Panc1 (cell line): ENCODE measurements at regions of chr10 and their contacts with region 1.

Region 1: DNA sequence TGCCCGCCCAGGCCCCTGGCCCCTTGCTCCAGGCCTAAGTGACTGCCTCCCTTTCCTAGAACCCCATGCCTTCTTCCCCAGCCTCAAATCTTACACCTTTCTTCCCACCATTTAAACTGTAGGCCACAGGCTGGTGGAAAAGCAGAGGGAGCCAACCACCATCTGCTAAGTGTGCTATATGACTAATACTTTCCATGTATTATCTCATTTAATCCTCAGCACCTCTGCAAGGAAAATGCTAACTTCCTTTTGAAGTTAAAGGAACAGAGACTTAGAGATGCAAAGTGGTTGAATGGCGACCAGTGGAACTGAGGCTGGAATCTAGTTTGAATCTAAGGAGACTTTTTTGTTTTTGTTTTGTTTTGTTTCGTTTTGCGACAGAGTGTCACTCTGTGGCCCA is 17.8 kb upstream of the MTPAP start:
- DNase-seq: no peak
- ATAC-seq: no peak
- H3K4me3 ChIP-seq: no peak overlapping the region
- H3K27ac ChIP-seq: no peak overlapping the region
- H3K4me1 ChIP-seq: no peaks in the 10 kb centered on the region
- H3K27me3 ChIP-seq: no peaks in the 10 kb centered on the region
- CTCF ChIP-seq: no peak

Region 2: DNA sequence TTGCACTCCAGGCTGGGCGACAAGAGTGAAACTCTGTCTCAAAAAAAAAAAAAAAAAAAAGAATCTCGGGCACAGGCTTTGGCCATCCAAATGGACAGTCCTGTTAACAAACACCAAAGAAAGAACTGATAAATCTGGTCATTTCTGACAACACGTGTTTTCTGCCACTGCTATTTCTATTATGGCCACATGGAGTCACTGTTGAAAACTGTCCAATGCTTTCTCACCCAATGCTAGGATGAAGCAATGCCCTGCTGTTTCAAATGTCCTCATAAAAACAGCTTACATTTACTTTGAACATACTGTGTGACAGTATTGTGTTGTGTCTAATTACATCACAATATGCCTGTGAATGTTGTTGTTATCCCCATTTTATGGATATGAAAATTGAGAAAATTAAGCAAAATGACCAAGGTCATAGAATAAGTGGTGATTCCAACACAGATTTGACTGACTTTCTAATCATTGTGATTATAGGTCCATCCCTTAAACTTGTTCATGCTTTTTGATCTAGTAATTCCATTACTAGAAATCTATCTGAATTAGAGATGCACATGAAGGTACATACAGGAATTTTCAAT is 47.3 kb after region 1 on chr10:
- CTCF ChIA-PET with region 1: interaction called, 12 read pairs
- POLR2A ChIA-PET with region 1: no interaction called
- in situ Hi-C with region 1: no loop called
- intact Hi-C with region 1: no loop called
- DNase-seq: no peak
- ATAC-seq: peak; percentile 78
- H3K4me3 ChIP-seq: no peak overlapping the region
- H3K27ac ChIP-seq: no peak overlapping the region
- H3K4me1 ChIP-seq: no peaks in the 10 kb centered on the region
- H3K27me3 ChIP-seq: no peaks in the 10 kb centered on the region
- CTCF ChIP-seq: peak; percentile 74